CD4-positive, alpha-beta memory T cell (primary cell): ENCODE measurements at regions of chr9 and their contacts with region 1.

Region 1: GRCh38 chr9:34591248-34591916 is 1.9 kb upstream of the CNTFR start:
- DNase-seq: peak; percentile 61 to 74 (median 65)
- H3K4me3 ChIP-seq: peak overlapping the region; percentile 23 to 50
- H3K4me3 Mint-ChIP-seq: peak overlapping the region; percentile 25 to 85 (median 80)
- H3K27ac ChIP-seq: no peak overlapping the region
- H3K27ac Mint-ChIP-seq: no peak overlapping the region
- H3K4me1 ChIP-seq: peaks cover 25% of the 10 kb centered on the region
- H3K4me1 Mint-ChIP-seq: peaks cover 12 to 45% (median 20%) of the 10 kb centered on the region in 4 donors
- H3K27me3 ChIP-seq: peaks cover 47% of the 10 kb centered on the region
- H3K27me3 Mint-ChIP-seq: peaks cover 52 to 67% of the 10 kb centered on the region in 2 donors

Region 2: GRCh38 chr9:34403554-34404380 is 187.6 kb before region 1 on chr9:
- CTCF ChIA-PET with region 1: interaction called, 13 read pairs
- POLR2A ChIA-PET with region 1: no interaction called
- intact Hi-C with region 1: loop called (anchors 1 kb)
- DNase-seq: peak; percentile 34 to 53 (median 43)
- H3K4me3 ChIP-seq: no peak overlapping the region
- H3K4me3 Mint-ChIP-seq: no peak overlapping the region
- H3K27ac ChIP-seq: no peak overlapping the region
- H3K27ac Mint-ChIP-seq: peak overlapping the region in 1 of 7 donors; percentile 52
- H3K4me1 ChIP-seq: no peaks in the 10 kb centered on the region
- H3K4me1 Mint-ChIP-seq: no peaks in the 10 kb centered on the region
- H3K27me3 ChIP-seq: no peaks in the 10 kb centered on the region
- H3K27me3 Mint-ChIP-seq: no peaks in the 10 kb centered on the region

Region 3: GRCh38 chr9:34437006-34437925 is 154.1 kb before region 1 on chr9:
- CTCF ChIA-PET with region 1: interaction called, 15 read pairs
- POLR2A ChIA-PET with region 1: no interaction called
- intact Hi-C with region 1: loop called (anchors 1 kb)
- DNase-seq: peak; percentile 65 to 69 (median 67)
- H3K4me3 ChIP-seq: no peak overlapping the region
- H3K4me3 Mint-ChIP-seq: no peak overlapping the region
- H3K27ac ChIP-seq: no peak overlapping the region
- H3K27ac Mint-ChIP-seq: no peak overlapping the region
- H3K4me1 ChIP-seq: peaks cover 11% of the 10 kb centered on the region
- H3K4me1 Mint-ChIP-seq: peaks cover 12 to 18% (median 13%) of the 10 kb centered on the region in 4 donors
- H3K27me3 ChIP-seq: no peaks in the 10 kb centered on the region
- H3K27me3 Mint-ChIP-seq: no peaks in the 10 kb centered on the region

Region 4: DNA sequence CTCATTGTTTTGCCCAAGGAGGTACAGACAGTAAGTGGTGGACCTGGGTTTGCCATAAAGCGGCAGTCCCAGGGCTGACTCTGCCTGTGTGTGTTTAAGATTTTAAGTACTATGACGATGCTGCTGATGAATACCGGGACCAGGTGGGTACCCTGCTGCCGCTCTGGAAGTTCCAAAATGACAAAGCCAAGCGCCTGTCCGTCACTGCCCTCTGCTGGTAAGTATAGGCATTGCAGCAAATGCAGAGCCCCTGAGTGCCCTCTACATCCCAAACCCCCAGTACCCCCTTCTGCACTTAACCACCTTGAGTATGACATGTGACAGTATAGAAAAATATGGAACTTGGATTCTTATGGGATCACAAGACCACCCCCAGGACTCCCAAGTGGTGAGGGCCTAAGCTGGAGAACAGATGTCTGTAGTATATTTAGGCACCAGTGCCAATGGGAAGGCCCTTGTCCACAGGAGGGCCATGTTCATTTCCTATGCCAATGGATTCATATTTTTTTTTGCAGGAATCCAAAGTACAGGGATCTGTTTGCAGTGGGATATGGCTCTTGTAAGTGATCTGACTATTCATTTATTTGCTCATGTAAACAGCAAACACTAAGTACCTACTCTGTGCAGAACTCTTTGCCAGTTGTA is 90.6 kb before region 1 on chr9:
- CTCF ChIA-PET with region 1: interaction called, 6 read pairs
- POLR2A ChIA-PET with region 1: no interaction called
- intact Hi-C with region 1: loop called (anchors 1 kb)
- DNase-seq: peak; percentile 54 to 69 (median 62)
- H3K4me3 ChIP-seq: no peak overlapping the region
- H3K4me3 Mint-ChIP-seq: no peak overlapping the region
- H3K27ac ChIP-seq: no peak overlapping the region
- H3K27ac Mint-ChIP-seq: no peak overlapping the region
- H3K4me1 ChIP-seq: no peaks in the 10 kb centered on the region
- H3K4me1 Mint-ChIP-seq: peaks cover 0 to 3% (median 1%) of the 10 kb centered on the region in 4 donors
- H3K27me3 ChIP-seq: no peaks in the 10 kb centered on the region
- H3K27me3 Mint-ChIP-seq: peaks cover 3 to 10% of the 10 kb centered on the region in 2 donors

Region 5: GRCh38 chr9:34512131-34513078 is 79.0 kb before region 1 on chr9:
- CTCF ChIA-PET with region 1: no interaction called
- POLR2A ChIA-PET with region 1: no interaction called
- intact Hi-C with region 1: no loop called
- DNase-seq: no peak
- H3K4me3 ChIP-seq: no peak overlapping the region
- H3K4me3 Mint-ChIP-seq: no peak overlapping the region
- H3K27ac ChIP-seq: no peak overlapping the region
- H3K27ac Mint-ChIP-seq: no peak overlapping the region
- H3K4me1 ChIP-seq: no peaks in the 10 kb centered on the region
- H3K4me1 Mint-ChIP-seq: no peaks in the 10 kb centered on the region
- H3K27me3 ChIP-seq: no peaks in the 10 kb centered on the region
- H3K27me3 Mint-ChIP-seq: no peaks in the 10 kb centered on the region

Region 6: DNA sequence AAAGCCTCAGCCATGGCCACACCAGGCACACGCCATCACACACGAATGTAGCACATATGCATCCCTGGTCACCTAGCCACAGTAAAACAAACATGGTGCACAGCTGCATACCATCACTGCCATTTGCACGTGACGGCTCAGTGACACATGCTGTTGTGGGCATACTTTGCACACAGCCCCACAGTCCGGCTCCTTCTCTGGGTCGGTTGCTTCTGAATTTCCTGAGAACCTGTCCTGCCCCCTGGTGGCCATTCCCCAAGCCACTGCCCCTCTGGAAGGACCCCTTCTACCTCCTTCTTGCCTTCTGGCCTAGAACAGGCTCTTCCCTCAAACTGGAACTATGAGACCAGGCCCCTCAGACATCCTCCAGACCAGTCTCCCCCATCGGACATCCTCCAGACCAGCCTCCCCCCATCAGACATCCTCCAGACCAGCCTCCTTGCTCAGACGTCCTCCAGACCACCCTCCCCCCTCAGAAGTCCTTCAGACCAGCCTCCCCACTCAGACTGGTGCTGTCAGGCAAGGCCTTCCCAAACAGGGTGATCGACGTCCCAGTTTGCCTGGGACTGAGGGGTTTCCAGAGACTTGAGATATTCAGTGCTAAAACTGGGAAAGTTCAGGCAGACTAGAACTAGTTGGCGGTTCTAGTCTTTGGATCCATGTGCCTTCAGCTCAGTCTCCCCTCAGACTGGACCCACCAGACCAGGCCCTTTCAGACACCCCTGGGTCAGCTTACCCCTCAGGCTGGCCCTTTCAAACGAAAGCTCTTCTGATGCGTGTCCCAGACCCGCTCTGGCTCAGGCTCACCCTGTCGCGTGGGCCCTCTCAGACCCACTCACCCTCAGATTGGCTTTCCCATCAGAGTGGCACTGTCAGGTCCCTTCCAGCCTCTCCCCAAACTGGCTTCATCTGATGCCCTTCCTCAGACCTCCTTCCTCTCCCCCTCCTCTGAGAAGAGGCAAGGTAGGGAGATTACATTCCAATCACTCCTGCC is 44.3 kb before region 1 on chr9:
- CTCF ChIA-PET with region 1: interaction called, 5 read pairs
- POLR2A ChIA-PET with region 1: no interaction called
- intact Hi-C with region 1: loop called (anchors 5 kb)
- DNase-seq: peak in 4 of 5 donors; percentile 12 to 19 (median 17)
- H3K4me3 ChIP-seq: no peak overlapping the region
- H3K4me3 Mint-ChIP-seq: no peak overlapping the region
- H3K27ac ChIP-seq: no peak overlapping the region
- H3K27ac Mint-ChIP-seq: no peak overlapping the region
- H3K4me1 ChIP-seq: no peaks in the 10 kb centered on the region
- H3K4me1 Mint-ChIP-seq: no peaks in the 10 kb centered on the region
- H3K27me3 ChIP-seq: no peaks in the 10 kb centered on the region
- H3K27me3 Mint-ChIP-seq: peaks cover 15% of the 10 kb centered on the region in 2 donors

Region 7: GRCh38 chr9:34578241-34579103 is 12.9 kb before region 1 on chr9:
- CTCF ChIA-PET with region 1: interaction called, 11 read pairs
- POLR2A ChIA-PET with region 1: interaction called, 3 read pairs
- intact Hi-C with region 1: no loop called
- DNase-seq: peak in 1 of 5 donors; percentile 10
- H3K4me3 ChIP-seq: no peak overlapping the region
- H3K4me3 Mint-ChIP-seq: peak overlapping the region in 5 of 8 donors; percentile 40 to 52 (median 44)
- H3K27ac ChIP-seq: no peak overlapping the region
- H3K27ac Mint-ChIP-seq: no peak overlapping the region
- H3K4me1 ChIP-seq: peaks cover 8% of the 10 kb centered on the region
- H3K4me1 Mint-ChIP-seq: peaks cover 2 to 27% (median 12%) of the 10 kb centered on the region in 4 donors
- H3K27me3 ChIP-seq: peaks cover 20% of the 10 kb centered on the region
- H3K27me3 Mint-ChIP-seq: peaks cover 45 to 64% of the 10 kb centered on the region in 2 donors

Region 8: DNA sequence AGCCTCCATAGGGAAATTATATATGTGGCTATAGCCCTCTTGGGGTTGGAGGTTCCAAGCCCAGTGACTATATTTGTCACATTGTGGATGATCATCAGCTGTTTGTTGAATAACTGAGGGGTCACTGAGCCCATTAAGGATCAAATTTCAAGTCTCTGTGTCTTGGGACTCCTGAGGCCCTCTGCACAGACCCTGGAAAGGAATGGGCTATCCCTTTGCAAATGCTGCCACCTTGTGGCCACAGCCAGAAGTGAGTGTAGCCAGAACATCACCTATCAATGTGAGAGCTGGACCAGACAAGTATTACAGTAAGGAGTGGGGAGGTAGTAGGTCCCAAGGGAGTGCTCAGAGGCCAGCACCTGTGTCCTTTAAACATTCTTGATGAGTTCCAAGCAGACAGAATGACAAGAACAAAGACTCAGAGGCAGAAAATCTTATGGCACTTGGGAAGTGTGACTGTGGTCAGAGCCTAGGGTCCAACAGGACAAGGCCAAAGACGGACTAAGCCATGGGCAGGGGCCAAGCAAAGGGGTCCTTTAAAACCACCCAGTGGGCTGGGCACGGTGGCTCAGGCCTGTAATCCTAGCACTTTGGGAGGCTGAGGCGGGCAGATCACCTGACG is 12.3 kb after region 1 on chr9:
- CTCF ChIA-PET with region 1: interaction called, 21 read pairs
- POLR2A ChIA-PET with region 1: no interaction called
- intact Hi-C with region 1: no loop called
- DNase-seq: peak; percentile 67 to 78 (median 74)
- H3K4me3 ChIP-seq: no peak overlapping the region
- H3K4me3 Mint-ChIP-seq: no peak overlapping the region
- H3K27ac ChIP-seq: no peak overlapping the region
- H3K27ac Mint-ChIP-seq: no peak overlapping the region
- H3K4me1 ChIP-seq: no peaks in the 10 kb centered on the region
- H3K4me1 Mint-ChIP-seq: peaks cover 0 to 2% (median 0%) of the 10 kb centered on the region in 4 donors
- H3K27me3 ChIP-seq: no peaks in the 10 kb centered on the region
- H3K27me3 Mint-ChIP-seq: peaks cover 0 to 3% of the 10 kb centered on the region in 2 donors